ENCODE measurements at regions of chr2 and their contacts with region 1.

Region 1: DNA sequence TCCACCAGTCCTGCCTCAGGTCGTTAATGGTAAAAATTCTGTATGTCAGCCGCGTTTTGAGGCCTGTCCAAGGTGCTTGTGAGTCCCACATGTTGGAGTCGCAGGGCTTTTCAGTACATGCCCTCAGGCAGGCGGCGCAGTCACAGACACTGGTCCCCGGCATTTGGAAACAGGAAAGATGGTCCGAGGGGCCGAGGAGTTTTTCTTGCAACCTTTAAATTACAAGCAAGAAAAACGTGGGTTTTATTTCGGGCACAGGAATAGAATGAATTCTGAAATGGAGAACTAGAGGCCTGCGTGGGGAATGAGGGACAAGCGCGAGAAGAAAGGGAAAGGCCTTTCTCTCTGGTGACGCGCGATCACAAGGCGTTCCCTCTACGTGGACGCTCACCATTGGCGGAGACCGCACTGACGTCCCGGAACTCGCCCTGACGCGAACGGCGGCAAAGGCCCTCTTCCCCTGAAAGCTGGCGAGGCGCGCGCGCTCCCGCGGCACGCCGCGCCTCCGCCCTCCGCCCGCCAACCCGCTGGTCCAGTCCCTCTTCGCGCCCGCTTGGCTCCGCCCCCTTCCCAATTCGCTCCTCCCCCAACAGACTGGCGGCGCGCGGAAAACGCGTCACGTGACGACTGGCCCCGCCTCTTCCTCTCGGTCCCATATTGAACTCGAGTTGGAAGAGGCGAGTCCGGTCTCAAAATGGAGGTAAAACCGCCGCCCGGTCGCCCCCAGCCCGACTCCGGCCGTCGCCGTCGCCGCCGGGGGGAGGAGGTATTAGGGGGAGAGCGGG is at the start of gene HNRNPA3:
- DNase-seq: peak; percentile 98 to 100
- H3K4me3 ChIP-seq: peak within 1 kb of the TSS; percentile 76
- H3K27ac ChIP-seq: peak within 1 kb of the TSS; percentile 97
- H3K4me1 ChIP-seq: peaks cover 30% of the 10 kb centered on the region
- H3K27me3 ChIP-seq: no peaks in the 10 kb centered on the region
- CTCF ChIP-seq: peak; percentile 27; the same call in 1 of the 2 replicates
- total RNA-seq, gene HNRNPA3: 245 and 290 TPM in 2 replicates

Region 2: DNA sequence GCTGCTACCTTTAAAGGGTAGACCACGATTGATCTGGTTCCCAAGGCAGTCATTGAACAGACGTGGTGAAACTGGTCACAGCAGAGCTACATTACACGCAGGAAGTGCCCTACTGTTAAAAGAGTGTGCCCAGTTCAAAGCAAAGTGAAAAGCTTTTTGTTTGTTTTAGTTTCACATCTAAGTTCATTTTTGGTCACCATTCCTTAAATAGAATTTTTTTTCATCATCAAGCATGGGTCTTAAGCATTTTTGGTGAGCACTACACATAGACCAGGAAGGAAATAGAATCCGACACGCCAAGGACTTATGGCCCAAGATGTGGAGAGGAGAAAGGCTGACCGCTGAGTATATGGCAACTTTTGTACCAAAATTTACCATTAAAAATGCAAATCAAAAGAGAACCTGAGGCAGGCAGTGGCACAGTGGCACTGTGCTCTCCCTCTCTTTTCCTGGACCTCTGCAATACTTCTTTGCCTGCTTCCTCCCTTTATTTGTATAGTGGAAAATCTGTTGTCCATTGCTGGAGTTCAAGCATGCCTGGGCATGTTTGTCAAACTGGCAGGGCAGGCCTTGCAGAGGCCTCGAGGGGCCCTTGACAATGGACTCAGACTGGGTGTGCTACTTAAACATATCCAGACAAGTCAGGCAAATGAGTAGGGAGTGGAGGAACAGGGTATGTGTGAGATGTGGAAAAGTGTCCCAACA is 42.3 kb before region 1 on chr2:
- CTCF ChIA-PET with region 1: interaction called, 10 read pairs
- POLR2A ChIA-PET with region 1: interaction called, 31 read pairs
- intact Hi-C with region 1: loop called (anchors 1 kb)
- DNase-seq: peak; percentile 68 to 92
- H3K4me3 ChIP-seq: no peak overlapping the region
- H3K27ac ChIP-seq: no peak overlapping the region
- H3K4me1 ChIP-seq: peaks cover 72% of the 10 kb centered on the region
- H3K27me3 ChIP-seq: no peaks in the 10 kb centered on the region
- CTCF ChIP-seq: no peak

Region 3: DNA sequence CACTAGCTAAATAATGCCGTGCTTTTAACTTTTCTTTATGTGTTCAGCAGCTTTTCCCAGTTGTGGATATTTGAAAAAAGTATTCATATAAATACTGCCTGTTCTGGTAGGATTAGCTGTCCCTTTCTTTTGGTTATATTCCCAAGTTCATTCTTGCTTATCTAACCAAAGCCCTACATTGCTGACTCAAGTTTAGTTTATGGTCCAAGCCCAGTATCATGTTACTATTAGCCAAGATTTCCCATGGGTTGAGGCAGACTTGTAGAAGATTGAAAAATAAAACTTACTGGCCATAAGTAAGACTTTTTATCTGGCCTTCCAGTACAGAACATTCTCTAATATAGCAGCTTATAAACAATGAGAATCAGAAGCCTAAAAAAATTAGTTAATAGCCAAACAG is 101.9 kb after region 1 on chr2:
- CTCF ChIA-PET with region 1: no interaction called
- POLR2A ChIA-PET with region 1: interaction called, 10 read pairs
- intact Hi-C with region 1: no loop called
- DNase-seq: peak in 1 of 2 experiments; percentile 54
- H3K4me3 ChIP-seq: no peak overlapping the region
- H3K27ac ChIP-seq: no peak overlapping the region
- H3K4me1 ChIP-seq: peaks cover 8% of the 10 kb centered on the region
- H3K27me3 ChIP-seq: no peaks in the 10 kb centered on the region
- CTCF ChIP-seq: no peak

Region 4: GRCh38 chr2:177397481-177398289 is 185.4 kb after region 1 on chr2:
- CTCF ChIA-PET with region 1: no interaction called
- POLR2A ChIA-PET with region 1: no interaction called
- intact Hi-C with region 1: loop called (anchors 5 kb)
- DNase-seq: peak; percentile 38 to 80
- H3K4me3 ChIP-seq: no peak overlapping the region
- H3K27ac ChIP-seq: peak overlapping the region; percentile 67
- H3K4me1 ChIP-seq: peaks cover 56% of the 10 kb centered on the region
- H3K27me3 ChIP-seq: no peaks in the 10 kb centered on the region
- CTCF ChIP-seq: no peak

Region 5: GRCh38 chr2:177618255-177619253 is 406.3 kb after region 1 on chr2:
- CTCF ChIA-PET with region 1: no interaction called
- POLR2A ChIA-PET with region 1: no interaction called
- intact Hi-C with region 1: loop called (anchors 2 kb)
- DNase-seq: peak; percentile 74 to 93
- H3K4me3 ChIP-seq: peak overlapping the region; percentile 64
- H3K27ac ChIP-seq: peak overlapping the region; percentile 48
- H3K4me1 ChIP-seq: 0 out of 2 replicates have a peak, but pooled peaks cover 6% of the 10 kb centered on the region
- H3K27me3 ChIP-seq: no peaks in the 10 kb centered on the region
- CTCF ChIP-seq: 0 out of 2 replicates have a peak, but pooled peaks have one; percentile 26